ENCODE measurements at regions of chr5 and their contacts with region 1.

Region 1: DNA sequence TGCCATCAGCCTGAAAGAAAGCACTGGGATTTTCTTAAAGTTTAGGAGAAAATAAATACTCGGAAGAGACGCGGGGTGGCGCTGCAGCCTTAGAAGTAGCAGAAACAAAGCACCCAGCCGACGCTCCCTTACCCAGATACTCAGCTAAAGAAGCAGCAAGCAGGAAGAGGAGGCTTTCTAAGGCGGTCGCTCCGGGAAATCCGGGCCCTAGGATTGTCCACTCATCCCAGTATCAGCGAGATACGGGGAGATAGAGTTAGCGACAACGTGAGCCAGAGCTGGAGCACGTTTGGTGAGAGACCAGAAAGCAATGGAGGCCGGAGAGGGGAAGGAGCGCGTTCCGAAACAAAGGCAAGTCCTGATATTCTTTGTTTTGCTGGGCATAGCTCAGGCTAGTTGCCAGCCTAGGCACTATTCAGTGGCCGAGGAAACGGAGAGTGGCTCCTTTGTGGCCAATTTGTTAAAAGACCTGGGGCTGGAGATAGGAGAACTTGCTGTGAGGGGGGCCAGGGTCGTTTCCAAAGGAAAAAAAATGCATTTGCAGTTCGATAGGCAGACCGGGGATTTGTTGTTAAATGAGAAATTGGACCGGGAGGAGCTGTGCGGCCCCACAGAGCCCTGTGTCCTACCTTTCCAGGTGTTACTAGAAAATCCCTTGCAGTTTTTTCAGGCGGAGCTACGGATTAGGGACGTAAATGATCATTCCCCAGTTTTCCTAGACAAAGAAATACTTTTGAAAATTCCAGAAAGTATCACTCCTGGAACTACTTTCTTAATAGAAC is at the start of gene PCDHB2:
- DNase-seq: peak; percentile 75 to 84
- H3K4me3 ChIP-seq: peak within 1 kb of the TSS; percentile 80 to 99 (median 92)
- H3K27ac ChIP-seq: peak within 1 kb of the TSS; percentile 91
- H3K4me1 ChIP-seq: no peaks in the 10 kb centered on the region; a peak in 2 of 7 replicates
- H3K27me3 ChIP-seq: no peaks in the 10 kb centered on the region
- CTCF ChIP-seq: peak; percentile 56 to 85 (median 83)
- EP300 ChIP-seq: no peak
- POLR2A ChIP-seq: peak; percentile 77 to 96
- RAD21 ChIP-seq: peak; percentile 76 to 82
- total RNA-seq, gene PCDHB2: 25.6 and 28.8 TPM in 2 replicates

Region 2: GRCh38 chr5:140710899-140711552 is 383.6 kb before region 1 on chr5:
- CTCF ChIA-PET with region 1: no interaction called
- POLR2A ChIA-PET with region 1: no interaction called
- DNase-seq: peak; percentile 74 to 85
- H3K4me3 ChIP-seq: peak overlapping the region; percentile 63 to 78 (median 70)
- H3K27ac ChIP-seq: no peak overlapping the region
- H3K4me1 ChIP-seq: no peaks in the 10 kb centered on the region
- H3K27me3 ChIP-seq: no peaks in the 10 kb centered on the region
- CTCF ChIP-seq: no peak
- EP300 ChIP-seq: no peak
- POLR2A ChIP-seq: peak in 1 of 2 experiments; percentile 64; a peak in 2 of 3 replicates
- RAD21 ChIP-seq: no peak

Region 3: DNA sequence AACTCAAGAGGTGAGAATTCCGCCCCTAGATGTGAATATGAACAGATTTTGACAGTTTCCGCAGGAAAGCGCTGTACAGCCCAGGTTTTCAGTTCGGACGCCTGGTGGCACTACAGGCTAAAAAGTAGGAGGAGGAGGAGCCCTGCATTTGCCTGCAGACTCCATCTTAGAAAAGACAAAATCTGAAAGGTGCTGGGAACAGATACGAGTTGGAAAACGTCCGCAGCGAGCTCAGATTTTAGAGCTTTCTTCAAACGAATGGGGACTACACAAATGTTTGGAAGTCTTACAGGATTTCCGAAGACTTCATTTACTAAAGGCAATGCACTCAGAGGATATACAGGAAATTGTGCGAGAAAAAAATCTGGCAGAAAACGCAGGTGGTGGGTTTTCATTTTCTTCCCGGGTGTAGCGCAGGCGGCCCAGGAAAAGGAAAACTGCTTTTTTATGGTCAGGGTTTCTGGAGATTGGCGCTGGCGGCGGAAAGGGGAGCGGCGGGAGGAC is 10.1 kb before region 1 on chr5:
- CTCF ChIA-PET with region 1: interaction called, 24 read pairs
- POLR2A ChIA-PET with region 1: interaction called, 14 read pairs
- DNase-seq: peak; percentile 44 to 66
- H3K4me3 ChIP-seq: peak overlapping the region; percentile 45 to 74 (median 62); a peak in 7 of 8 replicates
- H3K27ac ChIP-seq: peak overlapping the region; percentile 68
- H3K4me1 ChIP-seq: peaks cover 0 to 4% (median 0%) of the 10 kb centered on the region in 4 experiments; a peak in 1 of 7 replicates
- H3K27me3 ChIP-seq: no peaks in the 10 kb centered on the region
- CTCF ChIP-seq: peak; percentile 64 to 80 (median 73)
- EP300 ChIP-seq: no peak
- POLR2A ChIP-seq: peak in 1 of 2 experiments; percentile 66; a peak in 2 of 3 replicates
- RAD21 ChIP-seq: peak; percentile 71 to 84

Region 4: GRCh38 chr5:141105350-141105749 is 10.7 kb after region 1 on chr5:
- CTCF ChIA-PET with region 1: interaction called, 11 read pairs
- POLR2A ChIA-PET with region 1: interaction called, 8 read pairs
- DNase-seq: no peak
- H3K4me3 ChIP-seq: no peak overlapping the region
- H3K27ac ChIP-seq: no peak overlapping the region
- H3K4me1 ChIP-seq: no peaks in the 10 kb centered on the region; a peak in 2 of 7 replicates
- H3K27me3 ChIP-seq: no peaks in the 10 kb centered on the region
- CTCF ChIP-seq: no peak
- EP300 ChIP-seq: no peak
- POLR2A ChIP-seq: no peak
- RAD21 ChIP-seq: no peak